ENCODE measurements at regions of chr14 and their contacts with region 1.

Region 1: DNA sequence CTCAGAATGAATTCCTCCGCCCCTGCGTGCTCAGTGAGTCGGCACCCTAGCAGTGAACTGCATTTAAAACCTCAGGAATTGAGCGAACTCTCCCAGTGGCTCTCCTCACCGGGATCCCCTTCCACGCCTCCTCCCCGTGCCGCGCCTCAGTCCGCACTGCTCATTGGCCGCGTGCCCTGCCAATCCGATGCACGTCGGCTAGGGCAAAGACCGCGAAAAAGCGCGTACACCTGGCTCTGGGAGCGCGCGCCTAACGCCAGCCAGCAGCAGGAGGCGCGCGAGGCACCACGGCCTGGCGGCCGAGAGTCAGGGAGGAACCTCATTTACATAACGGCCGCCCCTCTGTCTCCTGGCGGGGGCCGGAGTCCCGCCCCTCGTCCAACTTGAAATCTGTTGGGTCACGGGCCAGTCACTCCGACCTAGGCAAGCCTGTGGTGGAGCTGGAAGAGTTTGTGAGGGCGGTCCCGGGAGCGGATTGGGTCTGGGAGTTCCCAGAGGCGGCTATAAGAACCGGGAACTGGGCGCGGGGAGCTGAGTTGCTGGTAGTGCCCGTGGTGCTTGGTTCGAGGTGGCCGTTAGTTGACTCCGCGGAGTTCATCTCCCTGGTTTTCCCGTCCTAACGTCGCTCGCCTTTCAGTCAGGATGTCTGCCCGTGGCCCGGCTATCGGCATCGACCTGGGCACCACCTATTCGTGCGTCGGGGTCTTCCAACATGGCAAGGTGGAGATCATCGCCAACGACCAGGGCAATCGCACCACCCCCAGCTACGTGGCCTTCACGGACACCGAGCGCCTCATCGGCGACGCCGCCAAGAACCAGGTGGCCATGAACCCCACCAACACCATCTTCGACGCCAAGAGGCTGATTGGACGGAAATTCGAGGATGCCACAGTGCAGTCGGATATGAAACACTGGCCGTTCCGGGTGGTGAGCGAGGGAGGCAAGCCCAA is at the start of gene HSPA2:
- DNase-seq: peak; percentile 99
- ATAC-seq: peak; percentile 93 to 97 (median 95)
- H3K4me3 ChIP-seq: peak within 1 kb of the TSS; percentile 81
- H3K27ac ChIP-seq: peak within 1 kb of the TSS; percentile 87
- H3K4me1 ChIP-seq: peaks cover 13% of the 10 kb centered on the region
- H3K27me3 ChIP-seq: no peaks in the 10 kb centered on the region
- CTCF ChIP-seq: peak; percentile 75
- total RNA-seq, gene HSPA2: 25.0 to 65.6 (median 54.1) TPM

Region 2: DNA sequence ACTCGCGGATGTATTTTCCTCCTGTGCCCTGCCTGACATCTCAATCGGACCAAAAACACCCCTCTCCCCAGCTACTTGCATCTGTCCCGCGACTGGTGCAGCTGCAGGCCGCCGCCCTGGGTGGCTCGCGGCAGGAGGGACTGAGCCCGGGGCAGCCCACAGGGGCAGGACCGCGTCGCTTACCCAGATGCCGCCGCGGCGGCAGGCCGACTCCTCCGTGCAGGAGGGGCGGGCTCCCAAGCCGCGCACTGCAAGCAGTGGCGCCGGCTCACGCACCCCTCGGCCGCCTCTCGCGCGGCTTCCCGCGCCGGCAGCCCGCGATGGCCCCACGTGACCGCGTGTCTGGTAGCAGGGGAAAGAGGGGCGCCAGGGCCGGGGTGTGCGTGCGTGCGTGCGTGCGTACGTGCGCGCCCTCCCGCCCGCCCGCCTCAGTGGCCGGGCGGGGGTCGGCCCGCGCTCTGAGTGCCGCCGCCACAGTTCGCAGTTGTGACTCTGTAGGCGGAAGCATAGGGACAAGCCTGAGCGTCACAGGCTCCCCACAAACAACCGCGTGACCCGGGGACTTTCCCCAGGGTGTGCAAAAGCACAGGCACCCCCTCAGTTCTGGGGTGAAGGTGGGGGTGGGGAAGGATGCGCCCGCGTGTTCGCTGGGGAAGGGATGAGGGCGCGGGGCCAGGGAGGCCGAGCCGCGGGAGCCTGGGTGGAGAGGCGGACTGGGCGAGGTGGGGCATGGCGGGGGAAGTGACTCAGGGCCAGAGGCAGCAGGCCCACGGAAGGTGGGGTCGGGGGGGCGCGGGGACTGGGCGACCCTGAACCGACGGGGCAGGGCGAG is 36.8 kb before region 1 on chr14 and contains the start of gene ZBTB25:
- intact Hi-C with region 1: loop called in 1 of 2 experiments (anchors 2 kb)
- DNase-seq: peak; percentile 93 to 96
- ATAC-seq: peak; percentile 74 to 79 (median 76)
- H3K4me3 ChIP-seq: peak within 1 kb of the TSS; percentile 93
- H3K27ac ChIP-seq: peak within 1 kb of the TSS; percentile 99
- H3K4me1 ChIP-seq: peaks cover 59% of the 10 kb centered on the region
- H3K27me3 ChIP-seq: no peaks in the 10 kb centered on the region
- CTCF ChIP-seq: no peak
- total RNA-seq, gene ZBTB25: 10.2 to 12.7 (median 11.8) TPM

Region 3: GRCh38 chr14:64574371-64575107 is 34.1 kb after region 1 on chr14:
- intact Hi-C with region 1: loop called in 1 of 2 experiments (anchors 5 kb)
- DNase-seq: peak in 1 of 2 donors; percentile 76
- ATAC-seq: peak; percentile 78 to 94 (median 88)
- H3K4me3 ChIP-seq: peak overlapping the region; percentile 34
- H3K27ac ChIP-seq: peak overlapping the region; percentile 90
- H3K4me1 ChIP-seq: peaks cover 34% of the 10 kb centered on the region
- H3K27me3 ChIP-seq: no peaks in the 10 kb centered on the region
- CTCF ChIP-seq: no peak

Region 4: DNA sequence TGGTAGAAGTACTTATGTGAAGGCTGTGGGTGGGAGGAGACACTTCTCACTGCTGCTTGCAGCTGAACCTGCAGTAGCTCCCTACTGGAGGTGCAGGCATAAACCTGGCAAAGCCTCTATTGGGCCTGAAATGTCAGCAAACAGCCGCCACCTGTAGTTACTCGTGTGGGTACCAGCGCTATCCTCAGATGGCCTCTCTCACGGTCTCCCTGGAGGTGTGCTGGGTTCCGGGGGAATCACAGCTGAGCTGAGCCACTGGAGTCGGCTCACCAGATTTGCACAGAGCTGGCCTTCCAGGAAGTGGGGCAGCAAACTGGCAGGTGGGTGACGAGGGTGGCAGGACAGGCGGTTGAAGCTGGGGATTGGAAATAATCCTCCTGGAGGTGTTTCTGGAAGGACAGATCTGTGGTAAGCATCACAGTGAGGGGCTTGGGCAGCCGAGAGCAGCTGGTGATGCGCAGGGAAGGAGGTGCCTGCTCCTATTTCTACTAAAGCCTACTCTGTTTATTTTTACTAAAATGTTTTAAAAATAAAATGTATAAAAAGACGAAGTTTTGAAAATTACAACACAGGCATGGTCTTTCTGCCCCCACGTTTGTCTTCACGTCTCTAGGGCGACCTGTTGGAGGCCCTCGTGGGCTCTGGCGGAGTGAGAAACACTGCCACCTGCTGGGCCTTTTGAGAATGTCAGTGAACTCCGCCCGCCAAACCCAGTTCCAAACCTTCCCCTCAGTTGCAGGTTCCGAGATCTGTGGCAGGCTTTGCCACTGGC is 95.9 kb after region 1 on chr14:
- intact Hi-C with region 1: loop called (anchors 2 to 5 kb)
- DNase-seq: peak; percentile 51 to 77
- ATAC-seq: peak; percentile 90 to 97 (median 92)
- H3K4me3 ChIP-seq: no peak overlapping the region
- H3K27ac ChIP-seq: no peak overlapping the region
- H3K4me1 ChIP-seq: no peaks in the 10 kb centered on the region
- H3K27me3 ChIP-seq: no peaks in the 10 kb centered on the region
- CTCF ChIP-seq: peak; percentile 93

Measured in psoas muscle (tissue), 8 donors.